ENCODE measurements at regions of chrX and their contacts with region 1.

Region 1: GRCh38 chrX:110146521-110146920 is 143.6 kb downstream of the TMEM164 start:
- DNase-seq: no peak
- ATAC-seq: peak; percentile 50 to 73 (median 58)
- H3K4me3 ChIP-seq: no peak overlapping the region
- H3K27ac ChIP-seq: no peak overlapping the region
- H3K4me1 ChIP-seq: peaks cover 17% of the 10 kb centered on the region
- H3K27me3 ChIP-seq: peaks cover 0 to 2% (median 0%) of the 10 kb centered on the region in 3 donors
- CTCF ChIP-seq: peak; percentile 52

Region 2: GRCh38 chrX:109760241-109760922 is 386.1 kb before region 1 on chrX:
- intact Hi-C with region 1: no loop called
- DNase-seq: no peak
- ATAC-seq: no peak
- H3K4me3 ChIP-seq: no peak overlapping the region
- H3K27ac ChIP-seq: no peak overlapping the region
- H3K4me1 ChIP-seq: no peaks in the 10 kb centered on the region
- H3K27me3 ChIP-seq: peaks cover 0 to 6% (median 0%) of the 10 kb centered on the region in 3 donors
- CTCF ChIP-seq: no peak

Region 3: DNA sequence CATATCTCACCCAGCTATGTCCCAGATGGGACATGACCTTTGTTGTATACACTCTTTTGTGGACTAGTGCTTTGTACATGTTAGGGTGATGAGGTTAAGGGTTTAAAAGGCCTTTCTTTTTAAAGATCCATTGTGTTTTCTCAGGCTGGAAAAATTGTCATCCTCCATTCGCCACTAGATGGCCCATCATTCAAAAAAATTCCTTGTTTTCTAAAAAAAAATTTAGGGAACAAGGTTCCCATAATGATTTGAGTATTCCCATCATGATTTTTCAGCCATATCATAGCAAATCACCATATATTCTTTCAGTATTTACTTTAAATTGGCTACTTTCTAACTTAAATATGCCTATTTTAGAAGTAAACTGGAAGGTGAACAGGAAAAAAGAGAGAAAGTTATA is 235.5 kb before region 1 on chrX:
- intact Hi-C with region 1: loop called (anchors 5 to 10 kb)
- DNase-seq: no peak
- ATAC-seq: no peak
- H3K4me3 ChIP-seq: no peak overlapping the region
- H3K27ac ChIP-seq: no peak overlapping the region
- H3K4me1 ChIP-seq: no peaks in the 10 kb centered on the region
- H3K27me3 ChIP-seq: peaks cover 0 to 6% (median 0%) of the 10 kb centered on the region in 3 donors
- CTCF ChIP-seq: peak; percentile 61

Region 4: GRCh38 chrX:110021180-110022022 is 125.1 kb before region 1 on chrX:
- intact Hi-C with region 1: loop called in 1 of 2 experiments (anchors 10 kb)
- DNase-seq: no peak
- ATAC-seq: peak; percentile 31 to 71 (median 55)
- H3K4me3 ChIP-seq: no peak overlapping the region
- H3K27ac ChIP-seq: peak overlapping the region; percentile 47
- H3K4me1 ChIP-seq: peaks cover 15% of the 10 kb centered on the region
- H3K27me3 ChIP-seq: peaks cover 0 to 16% (median 0%) of the 10 kb centered on the region in 3 donors
- CTCF ChIP-seq: no peak

Measured in psoas muscle (tissue), 8 donors.